Mammary epithelial cell (primary cell): ENCODE measurements at regions of chr3 and their contacts with region 1.

Region 1: DNA sequence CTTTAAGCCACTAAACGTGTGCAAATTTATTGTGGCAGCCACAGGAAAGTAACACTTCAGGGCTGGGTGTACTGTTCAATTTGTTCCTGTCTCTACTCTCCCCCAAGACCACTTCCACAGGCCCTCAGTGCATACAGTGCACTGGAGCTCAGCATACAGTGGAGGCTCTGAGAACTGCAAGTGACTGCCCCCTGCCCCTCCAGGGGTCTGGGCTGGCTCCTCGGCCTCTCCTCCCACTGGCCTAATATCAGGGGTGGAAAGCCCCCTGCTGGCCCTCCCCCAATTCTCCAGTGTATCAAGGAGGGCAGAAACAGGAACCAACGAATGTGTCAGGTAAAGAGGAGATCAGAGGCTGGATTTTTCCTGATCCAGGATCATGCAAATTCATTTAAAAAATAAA is 19.9 kb upstream of the HEG1 start:
- DNase-seq: no peak
- H3K4me3 ChIP-seq: no peak overlapping the region
- H3K27ac ChIP-seq: no peak overlapping the region
- H3K4me1 ChIP-seq: peaks cover 6% of the 10 kb centered on the region
- H3K27me3 ChIP-seq: no peaks in the 10 kb centered on the region
- CTCF ChIP-seq: no peak

Region 2: DNA sequence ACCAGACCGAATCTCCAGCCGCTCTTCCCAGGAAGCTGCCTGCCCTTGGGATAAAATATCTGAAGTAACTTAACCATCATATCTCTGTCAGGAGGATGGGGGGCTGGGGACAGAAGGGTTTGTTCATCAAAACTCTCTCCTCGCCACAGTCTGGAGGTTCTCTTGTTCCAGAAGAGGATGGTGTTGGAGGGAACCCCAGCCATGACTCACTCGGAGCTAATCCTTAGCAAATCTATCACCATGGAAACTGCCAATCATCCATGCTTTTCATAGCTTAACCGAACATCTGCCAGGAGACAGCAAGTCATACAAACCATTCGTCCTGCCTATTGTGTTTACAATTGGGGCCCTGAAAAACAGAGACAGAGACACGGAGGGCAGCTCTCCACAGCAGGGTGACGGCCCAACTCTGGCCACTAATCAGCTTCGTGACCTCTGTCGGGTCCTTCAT is 53.8 kb after region 1 on chr3:
- CTCF ChIA-PET with region 1: no interaction called
- dilution Hi-C with region 1: loop called (anchors 5 kb)
- in situ Hi-C with region 1: no loop called
- intact Hi-C with region 1: no loop called
- DNase-seq: peak; percentile 90
- H3K4me3 ChIP-seq: no peak overlapping the region
- H3K27ac ChIP-seq: no peak overlapping the region
- H3K4me1 ChIP-seq: peaks cover 20% of the 10 kb centered on the region
- H3K27me3 ChIP-seq: no peaks in the 10 kb centered on the region
- CTCF ChIP-seq: no peak

Region 3: GRCh38 chr3:125192190-125193035 is 116.7 kb after region 1 on chr3:
- CTCF ChIA-PET with region 1: no interaction called
- dilution Hi-C with region 1: no loop called
- in situ Hi-C with region 1: no loop called
- intact Hi-C with region 1: no loop called
- DNase-seq: no peak
- H3K4me3 ChIP-seq: no peak overlapping the region
- H3K27ac ChIP-seq: no peak overlapping the region
- H3K4me1 ChIP-seq: peaks cover 14% of the 10 kb centered on the region
- H3K27me3 ChIP-seq: no peaks in the 10 kb centered on the region
- CTCF ChIP-seq: no peak